PC-3 (cell line): ENCODE measurements at regions of chr11 and their contacts with region 1.

Region 1: DNA sequence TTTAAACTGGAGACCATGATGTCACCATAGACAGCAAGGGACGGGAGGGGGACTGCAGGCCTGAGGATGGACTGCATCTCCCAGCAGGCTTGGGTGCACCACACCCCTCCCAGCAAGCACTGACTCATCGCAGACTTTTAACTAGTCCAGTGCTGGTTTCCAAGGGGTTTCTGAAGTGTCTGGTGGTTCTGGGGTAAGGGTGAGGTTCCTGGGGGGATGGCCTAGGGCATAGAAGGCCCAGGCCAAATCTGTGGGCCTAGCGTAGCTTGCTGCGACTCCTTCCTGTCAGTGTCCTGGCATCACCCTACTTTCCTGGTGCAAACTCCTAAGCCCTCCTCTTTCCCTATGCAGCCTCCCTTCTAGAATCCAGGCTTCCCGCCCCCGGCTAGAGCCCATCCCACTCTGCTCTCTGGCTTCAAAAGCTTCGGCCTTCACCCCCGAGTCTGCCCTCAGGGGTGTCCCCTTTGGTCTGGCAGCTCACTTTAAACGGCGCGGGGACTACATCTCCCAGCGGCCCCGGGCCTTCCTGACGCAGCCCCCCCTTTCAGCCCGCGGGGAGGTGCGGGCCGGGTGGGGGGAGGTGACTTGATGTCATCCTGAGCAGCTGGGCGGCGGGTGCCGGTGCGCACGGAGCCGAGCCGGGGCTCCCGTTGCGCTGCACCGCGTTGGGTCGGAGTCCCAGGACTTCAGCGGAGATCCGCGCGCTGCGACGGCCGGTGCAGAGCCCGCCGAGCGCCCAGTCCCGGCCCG is at the start of gene PPP2R5B:
- DNase-seq: peak; percentile 97
- ATAC-seq: peak; percentile 94
- H3K4me3 ChIP-seq: peak within 1 kb of the TSS; percentile 95
- H3K27ac ChIP-seq: peak within 1 kb of the TSS; percentile 37
- H3K4me1 ChIP-seq: peaks cover 13% of the 10 kb centered on the region; the same call in 1 of the 2 replicates
- H3K27me3 ChIP-seq: no peaks in the 10 kb centered on the region
- CTCF ChIP-seq: no peak
- total RNA-seq, gene PPP2R5B: 24.9 and 31.3 TPM in 2 replicates

Region 2: GRCh38 chr11:64545605-64546004 is 378.7 kb before region 1 on chr11:
- CTCF ChIA-PET with region 1: no interaction called
- POLR2A ChIA-PET with region 1: no interaction called
- intact Hi-C with region 1: no loop called
- DNase-seq: peak; percentile 97
- ATAC-seq: peak; percentile 94
- H3K4me3 ChIP-seq: no peak overlapping the region
- H3K27ac ChIP-seq: no peak overlapping the region
- H3K4me1 ChIP-seq: peaks cover 11% of the 10 kb centered on the region
- H3K27me3 ChIP-seq: peaks cover 23% of the 10 kb centered on the region; the same call in 1 of the 2 replicates
- CTCF ChIP-seq: no peak

Region 3: DNA sequence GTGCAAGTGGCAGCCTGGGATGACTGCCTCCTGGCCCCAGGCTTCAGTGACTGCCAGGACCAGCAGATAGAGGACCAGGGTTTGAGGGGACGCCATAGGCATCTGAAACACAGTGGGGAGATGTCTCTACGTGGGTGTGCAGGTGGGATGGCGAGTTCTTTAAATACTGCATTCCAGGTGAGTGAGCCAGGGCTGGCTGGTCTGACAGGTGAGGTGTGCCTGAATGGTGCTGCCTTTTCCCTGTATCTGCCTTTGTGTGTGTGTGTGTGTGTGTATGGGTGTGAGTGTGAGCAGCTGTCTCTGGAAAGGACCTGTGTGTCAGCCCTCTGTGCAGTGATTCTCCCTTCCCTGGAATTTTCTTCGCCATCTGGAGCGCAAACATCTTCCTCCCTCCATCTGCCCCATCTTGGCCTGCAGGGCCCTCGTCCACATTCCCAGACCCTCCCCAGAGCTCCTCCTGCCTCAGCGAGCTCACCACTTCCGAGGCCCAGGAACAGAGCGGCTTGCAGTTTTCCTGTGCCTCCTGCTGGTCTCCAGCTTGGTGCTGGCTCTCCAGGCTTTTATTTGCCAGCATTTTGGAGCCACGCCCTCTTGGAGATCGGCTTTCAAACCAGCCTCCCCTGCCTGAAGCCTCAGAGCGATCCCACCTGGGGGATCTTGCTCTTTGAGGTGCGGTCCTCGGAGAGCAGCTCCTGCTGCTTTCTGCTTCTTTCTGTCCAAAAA is 11.2 kb after region 1 on chr11 and contains the start of gene GPHA2:
- CTCF ChIA-PET with region 1: no interaction called
- POLR2A ChIA-PET with region 1: no interaction called
- intact Hi-C with region 1: no loop called
- DNase-seq: peak; percentile 15
- ATAC-seq: peak; percentile 31; the same call in 1 of the 2 replicates
- H3K4me3 ChIP-seq: no peak within 1 kb of the TSS
- H3K27ac ChIP-seq: no peak within 1 kb of the TSS
- H3K4me1 ChIP-seq: no peaks in the 10 kb centered on the region
- H3K27me3 ChIP-seq: no peaks in the 10 kb centered on the region
- CTCF ChIP-seq: no peak
- total RNA-seq, gene GPHA2: not detected in 2 replicates

Region 4: GRCh38 chr11:64991341-64991740 is 67.1 kb after region 1 on chr11:
- CTCF ChIA-PET with region 1: interaction called, 13 read pairs
- POLR2A ChIA-PET with region 1: no interaction called
- intact Hi-C with region 1: no loop called
- DNase-seq: no peak
- ATAC-seq: no peak
- H3K4me3 ChIP-seq: no peak overlapping the region
- H3K27ac ChIP-seq: no peak overlapping the region
- H3K4me1 ChIP-seq: no peaks in the 10 kb centered on the region
- H3K27me3 ChIP-seq: no peaks in the 10 kb centered on the region
- CTCF ChIP-seq: no peak

Region 5: DNA sequence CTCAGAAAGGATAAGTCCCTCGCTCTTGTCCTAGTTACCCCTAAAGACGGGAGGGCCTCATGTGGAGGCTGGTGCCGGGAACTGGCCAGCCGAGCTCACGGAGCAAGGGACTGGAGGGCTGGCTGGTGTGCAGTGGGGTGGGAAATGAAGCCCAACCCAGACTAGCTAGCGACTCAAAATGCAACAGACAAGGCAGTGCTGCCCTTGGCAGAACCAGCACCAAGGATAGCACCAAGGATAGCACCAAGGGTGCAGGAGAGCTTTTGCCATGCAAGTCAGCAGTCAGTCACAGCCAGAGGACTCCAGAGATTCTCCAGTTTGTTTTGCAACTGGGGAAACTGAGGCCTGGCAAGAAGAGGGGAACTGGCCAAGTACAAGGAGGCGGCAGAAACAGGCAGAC is 79.0 kb after region 1 on chr11:
- CTCF ChIA-PET with region 1: interaction called, 3 read pairs
- POLR2A ChIA-PET with region 1: no interaction called
- intact Hi-C with region 1: loop called (anchors 2 kb)
- DNase-seq: peak; percentile 33
- ATAC-seq: no peak
- H3K4me3 ChIP-seq: no peak overlapping the region
- H3K27ac ChIP-seq: no peak overlapping the region
- H3K4me1 ChIP-seq: peaks cover 14% of the 10 kb centered on the region
- H3K27me3 ChIP-seq: no peaks in the 10 kb centered on the region
- CTCF ChIP-seq: no peak

Region 6: GRCh38 chr11:65013692-65014145 is 89.4 kb after region 1 on chr11:
- CTCF ChIA-PET with region 1: no interaction called
- POLR2A ChIA-PET with region 1: no interaction called
- intact Hi-C with region 1: loop called (anchors 1 kb)
- DNase-seq: peak; percentile 89
- ATAC-seq: peak; percentile 84
- H3K4me3 ChIP-seq: peak overlapping the region; percentile 74
- H3K27ac ChIP-seq: peak overlapping the region; percentile 72
- H3K4me1 ChIP-seq: peaks cover 14% of the 10 kb centered on the region
- H3K27me3 ChIP-seq: no peaks in the 10 kb centered on the region
- CTCF ChIP-seq: peak; percentile 58

Region 7: GRCh38 chr11:65027213-65028067 is 103.2 kb after region 1 on chr11 and contains the start of gene SNX15:
- CTCF ChIA-PET with region 1: no interaction called
- POLR2A ChIA-PET with region 1: interaction called, 4 read pairs
- intact Hi-C with region 1: loop called (anchors 1 kb)
- DNase-seq: peak; percentile 99
- ATAC-seq: peak; percentile 95
- H3K4me3 ChIP-seq: peak within 1 kb of the TSS; percentile 67
- H3K27ac ChIP-seq: peak within 1 kb of the TSS; percentile 66
- H3K4me1 ChIP-seq: peaks cover 10% of the 10 kb centered on the region
- H3K27me3 ChIP-seq: no peaks in the 10 kb centered on the region
- CTCF ChIP-seq: peak; percentile 56
- total RNA-seq, gene SNX15: 15.1 and 40.4 TPM in 2 replicates